Gastrocnemius medialis (tissue), 4 donors: ENCODE measurements at regions of chr17 and their contacts with region 1.

Region 1: GRCh38 chr17:1865252-1866037 is 35.6 kb downstream of the RPA1 start:
- DNase-seq: peak in 1 of 2 donors; percentile 51
- ATAC-seq: no peak
- H3K4me3 ChIP-seq: no peak overlapping the region
- H3K27ac ChIP-seq: peak overlapping the region; percentile 88 to 98 (median 92)
- H3K4me1 ChIP-seq: peaks cover 27% of the 10 kb centered on the region in 2 donors
- H3K27me3 ChIP-seq: no peaks in the 10 kb centered on the region
- CTCF ChIP-seq: peak; percentile 62 to 86 (median 75)
- POLR2A ChIP-seq: no peak

Region 2: GRCh38 chr17:1592751-1593629 is 272.5 kb before region 1 on chr17:
- in situ Hi-C with region 1: no loop called
- intact Hi-C with region 1: no loop called
- DNase-seq: peak; percentile 53 to 62
- ATAC-seq: peak; percentile 22 to 30
- H3K4me3 ChIP-seq: no peak overlapping the region
- H3K27ac ChIP-seq: peak overlapping the region; percentile 91 to 98 (median 96)
- H3K4me1 ChIP-seq: peaks cover 50 to 53% of the 10 kb centered on the region in 2 donors
- H3K27me3 ChIP-seq: no peaks in the 10 kb centered on the region
- CTCF ChIP-seq: no peak
- POLR2A ChIP-seq: no peak

Region 3: DNA sequence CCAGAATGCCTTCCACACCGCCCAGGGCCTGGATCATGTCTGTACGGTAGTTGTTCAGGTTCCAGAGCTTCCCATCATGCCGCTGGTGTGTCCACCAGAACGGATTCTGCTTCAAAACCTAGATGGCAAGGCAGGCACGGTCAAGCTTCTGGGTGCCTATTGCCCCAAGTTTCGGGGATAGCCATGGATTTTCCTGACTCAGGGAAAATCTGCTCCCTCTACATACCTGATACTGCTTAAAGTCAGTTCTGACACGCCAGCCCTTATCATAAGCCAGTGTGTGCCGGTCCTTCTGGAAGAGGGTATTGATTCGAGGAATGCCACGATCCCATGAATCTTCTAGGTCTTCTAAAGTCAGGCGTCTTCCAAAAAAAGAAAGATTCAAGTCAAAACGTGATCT is 204.4 kb before region 1 on chr17:
- in situ Hi-C with region 1: loop called (anchors 10 to 25 kb)
- intact Hi-C with region 1: no loop called
- DNase-seq: no peak
- ATAC-seq: no peak
- H3K4me3 ChIP-seq: no peak overlapping the region
- H3K27ac ChIP-seq: peak overlapping the region in 2 of 4 donors; percentile 16 to 36
- H3K4me1 ChIP-seq: no peaks in the 10 kb centered on the region
- H3K27me3 ChIP-seq: no peaks in the 10 kb centered on the region
- CTCF ChIP-seq: no peak
- POLR2A ChIP-seq: no peak

Region 4: DNA sequence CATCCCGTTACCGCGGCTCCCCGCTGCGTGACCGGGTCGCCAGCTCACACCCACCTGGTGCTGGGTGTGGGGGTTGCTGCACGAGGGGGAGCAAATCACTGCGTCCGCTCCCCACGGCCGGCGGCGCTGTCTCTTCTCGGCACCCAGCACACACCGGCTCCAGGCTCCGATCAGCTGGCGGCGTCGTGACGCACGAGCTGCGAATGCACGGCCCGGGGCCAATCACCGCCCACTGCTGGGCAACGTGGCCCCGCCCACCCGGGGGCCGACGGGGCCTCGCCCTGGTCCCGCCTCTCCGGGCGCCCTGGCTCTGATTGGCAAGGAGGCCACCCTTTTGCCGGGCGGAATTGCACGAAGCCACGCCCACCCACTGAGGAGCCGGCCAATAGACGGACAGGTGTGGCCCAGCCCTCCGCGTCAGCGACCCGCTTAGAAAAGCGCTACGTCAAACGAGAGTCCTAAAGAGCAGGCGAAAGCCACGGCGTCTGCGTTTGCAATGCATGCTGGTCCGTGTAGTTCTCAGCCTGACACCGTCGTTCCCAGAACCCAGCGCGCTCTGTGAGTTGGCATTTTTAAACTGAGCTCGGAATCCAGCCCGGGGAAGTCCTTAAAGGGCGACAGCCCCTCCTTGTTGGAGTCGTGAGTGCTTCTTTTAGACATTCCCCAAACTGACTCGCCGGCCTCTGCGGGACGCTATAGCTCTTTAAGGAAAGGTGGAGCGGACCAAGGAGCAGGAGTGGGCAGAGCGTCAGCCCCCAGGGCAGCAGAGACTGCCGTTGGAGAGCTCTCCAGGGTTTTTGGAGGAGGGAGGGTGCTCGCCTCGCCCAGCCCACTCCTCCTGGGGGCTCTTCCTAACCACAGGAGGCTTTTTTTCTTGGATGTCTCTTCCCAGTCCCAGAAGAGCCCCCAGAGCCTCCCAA is 149.1 kb before region 1 on chr17:
- in situ Hi-C with region 1: no loop called
- intact Hi-C with region 1: loop called (anchors 1 kb)
- DNase-seq: peak; percentile 100
- ATAC-seq: peak; percentile 47 to 59
- H3K4me3 ChIP-seq: peak overlapping the region; percentile 91 to 95 (median 94)
- H3K27ac ChIP-seq: peak overlapping the region; percentile 99 to 100 (median 100)
- H3K4me1 ChIP-seq: peaks cover 52 to 55% of the 10 kb centered on the region in 2 donors
- H3K27me3 ChIP-seq: no peaks in the 10 kb centered on the region
- CTCF ChIP-seq: no peak
- POLR2A ChIP-seq: peak; percentile 99 to 100

Region 5: GRCh38 chr17:1764284-1764683 is 101.2 kb before region 1 on chr17:
- in situ Hi-C with region 1: no loop called
- intact Hi-C with region 1: loop called (anchors 5 kb)
- DNase-seq: peak; percentile 83
- ATAC-seq: peak; percentile 23 to 42
- H3K4me3 ChIP-seq: peak overlapping the region; percentile 65 to 82 (median 74)
- H3K27ac ChIP-seq: peak overlapping the region; percentile 97 to 100 (median 98)
- H3K4me1 ChIP-seq: peaks cover 40 to 48% of the 10 kb centered on the region in 2 donors
- H3K27me3 ChIP-seq: no peaks in the 10 kb centered on the region
- CTCF ChIP-seq: no peak
- POLR2A ChIP-seq: peak; percentile 53 to 70